PC-9 (cell line): ENCODE measurements at regions of chr15 and their contacts with region 1.

Region 1: DNA sequence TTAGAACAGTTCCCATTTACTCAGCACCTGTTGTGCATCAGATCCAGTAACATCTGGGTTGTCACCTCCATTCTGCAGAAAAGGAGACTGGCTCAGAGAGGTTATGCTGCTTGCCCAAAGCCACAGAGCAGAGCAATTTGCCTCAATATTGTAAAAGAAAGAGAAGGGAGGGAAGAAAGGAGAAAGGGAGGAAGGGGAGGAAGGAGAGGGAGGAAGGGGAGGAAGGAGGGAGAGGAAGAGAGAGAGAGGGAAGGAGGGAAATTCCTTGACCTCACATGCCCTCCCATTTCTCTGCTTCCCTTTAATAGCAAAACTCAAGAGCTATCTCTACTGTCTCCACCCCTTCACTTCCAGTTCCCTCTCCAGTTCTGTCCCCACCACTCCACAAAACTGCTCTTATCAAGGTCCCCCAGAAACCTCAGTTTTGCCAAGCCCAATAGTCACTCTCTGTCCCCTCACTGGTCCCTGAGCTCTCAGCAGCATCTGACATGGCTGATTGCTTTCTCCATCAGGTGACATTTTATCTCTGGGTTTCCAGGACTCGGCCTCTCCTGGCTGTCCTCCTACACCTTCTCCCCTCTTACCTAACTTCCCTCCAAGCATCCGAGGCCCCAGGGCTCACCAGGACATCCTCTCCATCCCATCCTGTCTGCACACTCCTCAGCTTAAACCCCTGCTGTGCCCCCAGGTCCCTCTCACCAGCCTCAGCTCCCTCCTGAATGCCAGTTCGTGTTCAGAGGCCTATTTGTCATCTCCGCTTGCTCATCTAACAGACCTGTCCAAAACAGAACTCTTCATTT is 104.7 kb upstream of the LINGO1 start:
- DNase-seq: no peak
- H3K4me3 ChIP-seq: no peak overlapping the region
- H3K27ac ChIP-seq: no peak overlapping the region
- H3K4me1 ChIP-seq: no peaks in the 10 kb centered on the region
- H3K27me3 ChIP-seq: peaks cover 99% of the 10 kb centered on the region
- CTCF ChIP-seq: no peak

Region 2: DNA sequence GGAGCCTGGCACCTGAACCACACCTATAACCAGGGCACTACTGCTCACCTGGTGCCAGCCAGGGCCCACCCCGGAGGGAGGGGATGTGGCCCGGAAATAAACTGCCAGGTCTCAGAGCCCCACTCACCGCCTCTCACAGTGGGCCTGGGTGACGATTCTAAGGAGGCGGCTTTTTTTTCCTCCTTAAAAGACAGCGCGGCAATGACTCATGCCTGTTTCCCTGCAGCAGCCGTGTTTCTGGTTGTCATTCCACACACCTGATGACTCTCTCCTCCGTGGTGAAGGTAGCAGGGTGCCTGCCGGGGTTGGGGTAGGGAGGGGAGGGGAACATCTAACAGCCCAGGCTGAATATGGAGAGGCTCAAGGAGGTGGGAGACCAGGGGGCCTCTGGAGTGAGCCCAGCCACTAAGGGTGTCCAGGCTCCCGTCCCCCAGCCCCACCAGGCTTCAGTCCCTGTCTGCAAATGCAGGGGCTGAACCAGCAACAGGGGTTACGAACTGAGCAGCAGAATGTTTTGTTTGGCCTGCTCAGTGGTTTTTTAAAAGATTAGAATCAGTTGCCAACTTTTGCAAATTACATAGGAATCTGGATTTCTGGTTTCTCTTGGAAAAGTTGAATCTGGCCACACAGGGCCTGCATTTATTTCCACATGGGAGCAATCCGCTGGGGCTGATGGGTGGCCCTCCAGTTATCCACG is 22.6 kb after region 1 on chr15:
- CTCF ChIA-PET with region 1: no interaction called
- POLR2A ChIA-PET with region 1: interaction called, 14 read pairs
- intact Hi-C with region 1: no loop called
- DNase-seq: no peak
- H3K4me3 ChIP-seq: no peak overlapping the region
- H3K27ac ChIP-seq: no peak overlapping the region
- H3K4me1 ChIP-seq: no peaks in the 10 kb centered on the region
- H3K27me3 ChIP-seq: peaks cover 94% of the 10 kb centered on the region
- CTCF ChIP-seq: no peak